Sigmoid colon (tissue), 7 donors: ENCODE measurements at regions of chr13 and their contacts with region 1.

Region 1: DNA sequence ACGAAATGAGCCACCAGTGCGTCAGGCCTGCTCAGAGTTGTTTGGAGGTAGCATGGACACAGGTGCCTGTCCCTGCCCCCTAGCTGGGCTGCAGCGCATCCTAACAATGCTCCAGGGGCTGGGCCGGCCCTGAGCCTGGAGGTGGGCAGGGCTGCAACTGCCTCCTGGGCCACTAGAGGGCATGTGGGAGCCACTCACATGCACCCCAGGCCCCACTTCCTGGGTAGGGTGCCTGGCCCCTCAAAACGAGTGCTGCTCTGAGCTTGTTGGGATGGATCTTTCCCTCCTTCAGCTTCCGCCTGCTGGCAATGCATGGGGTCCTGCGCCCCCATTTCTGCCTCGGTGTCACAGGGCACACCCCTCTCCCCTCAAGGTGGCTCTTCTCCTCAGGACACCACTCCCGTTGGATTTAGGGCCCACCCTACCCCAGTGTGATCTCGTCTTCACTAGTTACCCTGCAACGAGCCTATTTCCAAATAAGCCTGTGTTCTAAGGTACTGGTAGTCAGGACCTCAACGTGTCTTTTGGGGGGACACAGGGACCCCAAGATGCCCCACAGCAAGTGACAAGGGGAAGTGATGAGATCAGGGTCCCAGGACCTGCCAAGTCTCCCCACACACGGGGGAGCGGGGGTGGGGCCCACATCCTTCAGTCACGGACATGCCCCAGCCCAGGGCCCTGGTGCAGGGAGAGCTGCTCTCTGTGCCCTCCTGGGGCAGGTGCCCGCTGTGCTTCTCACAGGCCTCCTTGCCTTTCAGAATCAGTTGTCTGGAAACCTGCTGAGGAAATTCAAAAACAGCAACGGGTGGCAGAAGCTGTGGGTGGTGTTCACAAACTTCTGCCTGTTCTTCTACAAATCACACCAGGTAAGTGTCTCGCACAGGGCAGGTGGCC is 131.3 kb downstream of the STK24 start:
- DNase-seq: peak; percentile 89
- H3K4me3 ChIP-seq: no peak overlapping the region
- H3K27ac ChIP-seq: peak overlapping the region; percentile 51 to 68 (median 66)
- H3K4me1 ChIP-seq: peaks cover 0 to 31% (median 22%) of the 10 kb centered on the region in 4 donors
- H3K27me3 ChIP-seq: no peaks in the 10 kb centered on the region
- CTCF ChIP-seq: peak; percentile 95 to 99 (median 96)
- EP300 ChIP-seq: no peak
- POLR2A ChIP-seq: no peak

Region 2: GRCh38 chr13:98653463-98653985 is 207.9 kb after region 1 on chr13:
- intact Hi-C with region 1: loop called (anchors 1 kb)
- DNase-seq: peak; percentile 90
- H3K4me3 ChIP-seq: no peak overlapping the region
- H3K27ac ChIP-seq: no peak overlapping the region
- H3K4me1 ChIP-seq: no peaks in the 10 kb centered on the region
- H3K27me3 ChIP-seq: no peaks in the 10 kb centered on the region
- CTCF ChIP-seq: peak; percentile 85 to 94 (median 90)
- EP300 ChIP-seq: no peak
- POLR2A ChIP-seq: no peak

Region 3: DNA sequence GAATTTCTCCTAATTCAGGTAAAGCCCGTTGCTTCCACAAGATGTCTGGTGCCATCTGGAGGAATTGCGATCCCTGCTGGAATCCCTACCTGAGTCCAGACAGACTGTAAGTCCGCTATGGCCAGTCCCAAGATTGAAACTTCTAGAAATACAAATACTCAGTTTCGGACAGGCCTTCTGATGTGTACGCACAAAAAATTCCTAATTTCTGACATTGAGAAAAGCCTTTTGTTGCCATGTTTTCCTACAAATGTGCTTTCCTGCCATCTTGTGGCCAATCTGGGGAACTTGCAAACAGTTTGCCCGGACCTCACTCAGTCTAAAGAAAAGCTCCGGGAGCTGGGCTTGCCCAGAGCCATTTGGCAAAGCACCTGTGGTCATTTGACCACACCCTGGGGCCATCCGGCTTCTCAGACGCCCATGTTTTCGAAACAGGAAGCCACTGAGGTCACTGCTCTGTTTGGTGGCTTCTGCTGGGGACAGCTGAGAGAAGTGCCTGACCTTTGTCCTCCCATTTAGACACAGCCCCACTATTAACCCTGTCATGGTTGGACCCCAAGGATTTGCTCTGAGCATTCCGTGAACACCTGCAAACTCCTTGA is 227.5 kb after region 1 on chr13:
- intact Hi-C with region 1: loop called (anchors 1 kb)
- DNase-seq: peak; percentile 84
- H3K4me3 ChIP-seq: peak overlapping the region in 1 of 4 donors; percentile 2
- H3K27ac ChIP-seq: no peak overlapping the region
- H3K4me1 ChIP-seq: peaks cover 0 to 11% (median 3%) of the 10 kb centered on the region in 4 donors
- H3K27me3 ChIP-seq: no peaks in the 10 kb centered on the region
- CTCF ChIP-seq: peak; percentile 29 to 84 (median 76)
- EP300 ChIP-seq: no peak
- POLR2A ChIP-seq: no peak